HCT116 (cell line): ENCODE measurements at regions of chr11 and their contacts with region 1.

Region 1: DNA sequence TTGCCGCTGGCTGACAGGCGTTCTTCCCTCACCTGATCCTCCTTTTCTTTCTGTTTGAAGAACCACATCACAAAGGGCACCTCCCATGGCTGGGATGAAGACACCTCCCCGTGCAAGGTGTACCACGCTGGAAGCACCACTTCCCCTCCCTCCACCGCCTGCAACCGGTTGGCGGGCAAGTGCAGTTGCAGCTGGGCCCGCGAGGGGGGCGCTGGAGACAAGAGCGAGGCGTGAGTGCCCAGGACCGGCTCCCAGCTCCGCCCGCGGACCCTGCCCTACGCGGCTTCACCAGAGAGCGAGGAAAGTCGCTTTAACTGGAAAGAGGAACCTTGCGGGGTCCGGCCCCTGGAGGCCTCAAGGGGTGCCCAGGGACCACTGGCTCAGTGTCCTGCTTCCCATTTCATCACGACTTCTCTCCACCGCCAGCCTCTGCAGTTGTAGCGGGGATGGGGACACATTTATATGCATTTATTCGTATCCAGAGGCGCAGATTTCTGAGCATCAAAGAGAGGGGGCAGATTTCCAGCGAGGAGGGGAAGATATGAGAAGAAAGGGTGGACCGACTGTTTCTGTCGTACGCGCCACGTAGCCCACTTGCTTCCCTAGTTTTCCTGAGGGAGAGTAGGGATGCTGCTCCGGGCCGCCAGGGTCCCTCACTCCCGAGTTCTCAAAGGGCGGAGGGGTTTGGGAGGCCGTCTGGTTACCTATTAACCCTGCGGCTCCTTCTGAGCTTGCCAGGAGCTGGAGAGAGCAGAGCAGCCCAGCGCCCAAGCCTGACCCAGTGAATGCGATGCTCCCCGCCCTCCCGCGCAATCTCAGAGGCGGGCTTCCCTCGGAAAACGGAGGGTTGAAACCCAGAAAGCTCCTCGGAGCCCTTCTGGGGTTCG is 3.5 kb downstream of the ESAM start:
- DNase-seq: peak; percentile 59
- ATAC-seq: peak; percentile 79
- H3K4me3 ChIP-seq: peak overlapping the region; percentile 5 to 28; a peak in 3 of 4 replicates
- H3K27ac ChIP-seq: no peak overlapping the region
- H3K4me1 ChIP-seq: peaks cover 14 to 36% of the 10 kb centered on the region in 2 experiments
- H3K27me3 ChIP-seq: no peaks in the 10 kb centered on the region
- CTCF ChIP-seq: peak; percentile 64 to 72 (median 72); a peak in 5 of 6 replicates
- POLR2A ChIP-seq: no peak
- RAD21 ChIP-seq: peak; percentile 61

Region 2: DNA sequence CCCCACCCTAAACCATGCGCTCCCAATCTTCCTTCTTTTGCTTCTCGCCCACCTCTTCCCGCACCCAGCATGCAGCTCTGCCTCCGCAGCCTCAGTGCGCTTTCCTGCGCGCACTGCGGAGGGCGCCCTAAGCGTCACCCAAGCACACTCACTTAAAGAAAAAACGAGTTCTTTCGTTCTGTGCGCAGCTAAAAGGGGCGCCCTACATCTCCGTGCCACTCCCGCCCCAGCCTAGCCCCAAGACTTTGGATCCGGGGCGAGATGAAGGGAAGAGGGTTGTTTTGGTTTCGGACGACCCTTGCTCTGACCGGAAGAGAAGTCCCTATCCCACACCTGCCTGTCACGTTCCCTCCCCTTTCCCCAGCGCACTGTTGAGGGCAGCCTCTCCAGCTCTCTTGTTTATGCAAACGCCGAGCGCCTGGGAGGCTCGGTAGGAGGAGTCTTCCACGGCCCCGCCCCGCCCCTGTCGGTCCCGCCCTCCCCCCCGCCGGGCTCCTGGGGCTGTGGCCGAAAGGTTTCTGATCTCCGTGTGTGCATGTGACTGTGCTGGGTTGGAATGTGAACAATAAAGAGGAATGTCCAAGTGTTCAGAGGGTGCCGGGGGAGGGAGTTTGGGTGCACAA is 11.8 kb before region 1 on chr11:
- CTCF ChIA-PET with region 1: interaction called, 13 read pairs
- POLR2A ChIA-PET with region 1: interaction called, 5 read pairs
- RAD21 ChIA-PET with region 1: interaction called in 1 of 2 experiments, 3 read pairs
- intact Hi-C with region 1: loop called (anchors 1 kb)
- DNase-seq: peak; percentile 82
- ATAC-seq: peak; percentile 89
- H3K4me3 ChIP-seq: peak overlapping the region; percentile 56 to 63
- H3K27ac ChIP-seq: peak overlapping the region; percentile 56
- H3K4me1 ChIP-seq: peaks cover 10 to 36% of the 10 kb centered on the region in 2 experiments
- H3K27me3 ChIP-seq: no peaks in the 10 kb centered on the region
- CTCF ChIP-seq: peak; percentile 55 to 70 (median 66); a peak in 5 of 6 replicates
- POLR2A ChIP-seq: no peak
- RAD21 ChIP-seq: peak; percentile 47

Region 3: GRCh38 chr11:124778281-124778680 is 19.7 kb after region 1 on chr11:
- CTCF ChIA-PET with region 1: interaction called, 17 read pairs
- POLR2A ChIA-PET with region 1: no interaction called
- RAD21 ChIA-PET with region 1: no interaction called
- intact Hi-C with region 1: no loop called
- DNase-seq: peak; percentile 8
- ATAC-seq: peak; percentile 84
- H3K4me3 ChIP-seq: no peak overlapping the region
- H3K27ac ChIP-seq: no peak overlapping the region
- H3K4me1 ChIP-seq: peaks cover under 1 to 8% of the 10 kb centered on the region in 2 experiments; a peak in 2 of 4 replicates
- H3K27me3 ChIP-seq: no peaks in the 10 kb centered on the region
- CTCF ChIP-seq: peak; percentile 48 to 56 (median 49); a peak in 5 of 6 replicates
- POLR2A ChIP-seq: no peak
- RAD21 ChIP-seq: peak; percentile 54

Region 4: DNA sequence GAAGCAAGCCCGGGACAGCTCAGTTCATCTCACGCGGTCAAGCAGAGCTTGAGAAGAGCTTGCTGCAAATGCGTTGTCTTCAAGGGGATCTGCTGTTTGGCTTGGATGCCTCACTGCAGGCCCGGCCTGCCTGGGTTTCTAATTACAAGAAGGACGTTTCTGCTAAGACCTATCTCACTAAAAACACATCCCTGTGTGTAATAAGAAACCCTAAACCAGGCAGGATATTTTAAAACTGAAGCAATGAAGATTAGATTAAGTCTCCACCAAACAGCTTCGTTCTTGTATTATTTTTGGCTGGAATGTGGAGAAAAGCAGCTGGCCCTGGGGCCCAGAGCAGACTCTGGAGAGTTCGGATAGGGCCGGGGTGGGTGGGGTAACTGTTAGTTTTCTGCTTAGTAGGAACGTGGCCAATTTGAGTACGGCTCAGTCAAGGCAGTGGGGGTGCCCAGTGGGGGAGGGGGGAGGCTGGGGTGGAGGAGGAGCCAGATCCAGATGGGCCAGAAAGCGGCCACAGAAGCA is 412.0 kb after region 1 on chr11:
- CTCF ChIA-PET with region 1: no interaction called
- POLR2A ChIA-PET with region 1: no interaction called
- RAD21 ChIA-PET with region 1: no interaction called
- intact Hi-C with region 1: no loop called
- DNase-seq: no peak
- ATAC-seq: no peak
- H3K4me3 ChIP-seq: no peak overlapping the region
- H3K27ac ChIP-seq: no peak overlapping the region
- H3K4me1 ChIP-seq: no peaks in the 10 kb centered on the region
- H3K27me3 ChIP-seq: no peaks in the 10 kb centered on the region
- CTCF ChIP-seq: no peak
- POLR2A ChIP-seq: no peak
- RAD21 ChIP-seq: no peak